RWPE1 (cell line): ENCODE measurements at regions of chr1 and their contacts with region 1.

Region 1: GRCh38 chr1:160374306-160375110 is 7.6 kb downstream of the NHLH1 start:
- DNase-seq: no peak
- H3K27ac ChIP-seq: no peak overlapping the region
- CTCF ChIP-seq: no peak

Region 2: GRCh38 chr1:158809862-158810261 is 1564.6 kb before region 1 on chr1:
- CTCF ChIA-PET with region 1: no interaction called
- POLR2A ChIA-PET with region 1: no interaction called
- DNase-seq: no peak
- H3K27ac ChIP-seq: no peak overlapping the region
- CTCF ChIP-seq: no peak

Region 3: GRCh38 chr1:161374373-161374772 is 999.9 kb after region 1 on chr1:
- CTCF ChIA-PET with region 1: interaction called, 11 read pairs
- POLR2A ChIA-PET with region 1: no interaction called
- DNase-seq: no peak
- H3K27ac ChIP-seq: no peak overlapping the region
- CTCF ChIP-seq: no peak